Heart right ventricle (tissue), 16 donors: ENCODE measurements at regions of chr20 and their contacts with region 1.

Region 1: GRCh38 chr20:44187051-44187762 is at the start of gene JPH2:
- DNase-seq: peak; percentile 71 to 84
- ATAC-seq: peak; percentile 72 to 92 (median 89)
- H3K4me3 ChIP-seq: peak within 1 kb of the TSS; percentile 20 to 73 (median 60)
- H3K27ac ChIP-seq: peak within 1 kb of the TSS; percentile 79 to 98 (median 93)
- H3K4me1 ChIP-seq: peaks cover 6 to 52% (median 21%) of the 10 kb centered on the region in 9 donors
- H3K27me3 ChIP-seq: peaks cover 0 to 32% (median 0%) of the 10 kb centered on the region in 7 donors
- CTCF ChIP-seq: no peak
- total RNA-seq, gene JPH2: 97.2 to 215 (median 152) TPM

Region 2: GRCh38 chr20:43749734-43750294 is 437.4 kb before region 1 on chr20:
- intact Hi-C with region 1: loop called in 1 of 10 experiments (anchors 10 kb)
- DNase-seq: peak; percentile 65 to 84
- ATAC-seq: peak; percentile 62 to 87 (median 84)
- H3K4me3 ChIP-seq: no peak overlapping the region
- H3K27ac ChIP-seq: no peak overlapping the region
- H3K4me1 ChIP-seq: peaks cover 0 to 52% (median 0%) of the 10 kb centered on the region in 9 donors
- H3K27me3 ChIP-seq: peaks cover 0 to 46% (median 19%) of the 10 kb centered on the region in 7 donors
- CTCF ChIP-seq: peak; percentile 99 to 100 (median 99)

Region 3: GRCh38 chr20:44115762-44116644 is 71.2 kb before region 1 on chr20:
- intact Hi-C with region 1: loop called (anchors 1 to 5 kb)
- DNase-seq: no peak
- ATAC-seq: peak in 6 of 8 donors; percentile 3 to 31 (median 14)
- H3K4me3 ChIP-seq: no peak overlapping the region
- H3K27ac ChIP-seq: peak overlapping the region in 6 of 10 donors; percentile 16 to 60 (median 32)
- H3K4me1 ChIP-seq: peaks cover 0 to 76% (median 14%) of the 10 kb centered on the region in 9 donors
- H3K27me3 ChIP-seq: peaks cover 0 to 18% (median 9%) of the 10 kb centered on the region in 7 donors
- CTCF ChIP-seq: no peak

Region 4: DNA sequence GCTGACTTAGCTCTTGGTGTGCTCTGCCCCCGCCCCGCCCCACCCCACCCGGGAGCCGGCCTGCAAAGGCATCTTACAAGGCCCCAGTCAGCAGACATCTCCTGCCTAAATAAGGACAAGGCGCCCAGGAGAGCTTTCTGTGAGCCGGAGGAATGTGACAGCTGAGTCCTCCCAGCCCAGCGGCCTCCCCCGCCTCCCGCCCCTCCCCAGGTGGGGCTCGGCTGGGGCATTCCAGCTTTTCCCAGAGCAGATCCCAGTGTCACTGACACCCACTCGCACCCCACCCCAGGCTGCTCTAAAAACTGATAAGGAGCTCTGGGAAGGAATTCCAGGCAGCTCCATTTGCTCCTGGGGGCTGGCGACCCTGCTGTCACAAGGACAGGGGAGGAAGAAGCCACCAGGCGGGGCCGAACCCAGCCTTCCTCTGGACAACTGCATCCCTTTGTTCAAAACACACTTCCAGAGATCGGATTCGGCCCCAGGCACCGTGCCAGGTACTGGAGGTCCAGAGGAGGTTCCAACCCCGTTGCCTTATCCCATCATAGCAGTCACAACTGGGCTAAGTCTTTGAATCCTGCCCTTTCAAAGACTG is 49.9 kb before region 1 on chr20:
- intact Hi-C with region 1: loop called in 4 of 10 experiments (anchors 2 to 5 kb)
- DNase-seq: peak; percentile 68 to 72
- ATAC-seq: peak; percentile 66 to 85 (median 77)
- H3K4me3 ChIP-seq: no peak overlapping the region
- H3K27ac ChIP-seq: peak overlapping the region; percentile 29 to 91 (median 88)
- H3K4me1 ChIP-seq: peaks cover 9 to 74% (median 41%) of the 10 kb centered on the region in 9 donors
- H3K27me3 ChIP-seq: peaks cover 0 to 4% (median 0%) of the 10 kb centered on the region in 7 donors
- CTCF ChIP-seq: no peak

Region 5: GRCh38 chr20:44142413-44142812 is 44.8 kb before region 1 on chr20:
- intact Hi-C with region 1: loop called in 4 of 10 experiments (anchors 2 to 5 kb)
- DNase-seq: no peak
- ATAC-seq: peak in 5 of 8 donors; percentile 3 to 22 (median 10)
- H3K4me3 ChIP-seq: no peak overlapping the region
- H3K27ac ChIP-seq: peak overlapping the region; percentile 36 to 91 (median 82)
- H3K4me1 ChIP-seq: peaks cover 2 to 98% (median 54%) of the 10 kb centered on the region in 9 donors
- H3K27me3 ChIP-seq: peaks cover 0 to 4% (median 0%) of the 10 kb centered on the region in 7 donors
- CTCF ChIP-seq: no peak

Region 6: DNA sequence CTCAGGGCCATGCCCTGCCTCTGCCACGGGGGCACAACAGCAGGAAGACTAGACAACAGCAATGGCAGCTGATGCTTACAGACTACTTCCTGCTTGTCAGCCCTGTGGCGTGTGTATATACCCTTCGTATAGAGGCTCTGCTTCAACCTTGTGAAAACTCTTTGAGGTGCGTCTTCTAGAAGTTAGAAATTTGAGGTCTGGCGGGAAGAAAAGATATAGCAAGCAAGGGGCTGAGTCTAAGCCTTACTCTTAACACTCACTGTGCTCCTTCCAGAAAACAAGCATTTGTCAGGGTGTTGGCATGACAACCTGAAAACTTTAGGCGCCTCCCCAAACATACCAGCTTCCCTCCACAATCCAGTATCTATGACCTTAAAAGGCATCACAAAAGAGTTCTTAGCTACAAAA is 33.6 kb before region 1 on chr20:
- intact Hi-C with region 1: loop called in 3 of 10 experiments (anchors 5 kb)
- DNase-seq: no peak
- ATAC-seq: no peak
- H3K4me3 ChIP-seq: no peak overlapping the region
- H3K27ac ChIP-seq: peak overlapping the region in 7 of 10 donors; percentile 40 to 91 (median 90)
- H3K4me1 ChIP-seq: peaks cover 3 to 73% (median 36%) of the 10 kb centered on the region in 9 donors
- H3K27me3 ChIP-seq: peaks cover 0 to 3% (median 0%) of the 10 kb centered on the region in 7 donors
- CTCF ChIP-seq: no peak